ENCODE measurements at regions of chr10 and their contacts with region 1.

Region 1: GRCh38 chr10:101214446-101215396 is 14.5 kb downstream of the LBX1 start:
- DNase-seq: peak; percentile 69
- H3K4me3 Mint-ChIP-seq: peak overlapping the region; percentile 3
- H3K27ac Mint-ChIP-seq: peak overlapping the region; percentile 41
- H3K4me1 Mint-ChIP-seq: peaks cover 20% of the 10 kb centered on the region
- H3K27me3 Mint-ChIP-seq: peaks cover 70% of the 10 kb centered on the region

Region 2: DNA sequence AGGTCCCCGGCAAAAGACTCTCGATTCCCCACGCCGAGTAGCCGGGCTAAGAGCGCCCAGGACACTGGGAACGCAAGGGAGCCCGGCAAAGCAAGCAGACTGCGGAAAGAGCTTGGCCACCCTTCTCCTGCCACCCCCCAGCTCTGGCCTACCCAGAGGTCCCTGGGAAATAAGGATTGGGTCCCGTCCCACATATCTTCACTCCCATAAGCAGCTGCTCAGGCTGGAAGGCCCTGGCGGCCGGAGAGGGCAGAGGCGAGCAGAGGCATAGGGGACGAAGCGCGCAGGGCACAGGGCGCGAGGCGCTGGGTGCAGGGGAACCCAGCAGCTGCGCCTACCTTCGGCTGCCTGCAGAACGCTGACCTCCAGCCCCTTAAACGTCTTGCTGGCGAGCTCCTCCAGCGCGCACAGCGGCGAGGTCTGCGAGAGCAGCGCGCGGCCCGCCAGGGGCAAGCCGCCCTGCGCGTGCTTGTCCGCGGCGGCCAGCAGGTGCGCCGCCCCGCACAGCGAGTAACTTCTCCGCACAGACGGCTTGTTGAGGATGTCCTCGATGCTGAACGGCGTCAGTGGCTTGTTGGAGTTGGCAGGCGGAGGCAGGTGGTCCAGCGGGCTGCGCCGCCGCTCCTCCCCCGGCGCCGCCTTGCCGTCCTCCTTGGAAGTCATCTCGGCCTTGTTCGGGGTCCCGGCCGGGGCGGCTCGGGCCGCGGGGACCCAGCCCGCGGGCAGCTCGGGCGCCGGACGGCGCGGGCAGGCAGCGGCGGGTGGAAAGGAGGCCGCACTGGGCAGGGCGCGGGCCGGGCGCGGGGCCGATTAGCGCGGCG is 13.6 kb after region 1 on chr10:
- CTCF ChIA-PET with region 1: interaction called, 15 read pairs
- POLR2A ChIA-PET with region 1: no interaction called
- DNase-seq: no peak
- H3K4me3 Mint-ChIP-seq: peak overlapping the region; percentile 37
- H3K27ac Mint-ChIP-seq: peak overlapping the region; percentile 77
- H3K4me1 Mint-ChIP-seq: peaks cover 30% of the 10 kb centered on the region
- H3K27me3 Mint-ChIP-seq: peaks cover 74% of the 10 kb centered on the region

Region 3: DNA sequence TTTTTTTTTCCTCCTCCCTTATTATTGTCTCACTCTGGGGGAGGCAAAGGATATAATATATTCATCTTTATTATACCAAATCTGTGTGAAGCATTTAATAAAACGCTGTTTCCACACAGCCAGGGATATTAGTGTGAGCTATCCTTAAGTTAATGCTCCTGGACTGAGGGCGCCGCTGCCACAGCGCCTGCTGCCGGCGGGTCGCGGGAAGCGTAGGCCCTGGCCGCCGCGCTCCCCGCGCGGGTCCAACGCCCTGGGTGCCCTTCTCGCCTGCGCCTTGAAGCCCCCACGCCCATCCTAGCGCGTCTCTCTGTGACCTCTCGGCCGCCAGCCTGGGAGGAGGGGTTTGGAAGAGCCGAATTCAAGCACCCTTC is 24.0 kb after region 1 on chr10:
- CTCF ChIA-PET with region 1: interaction called, 11 read pairs
- POLR2A ChIA-PET with region 1: no interaction called
- DNase-seq: no peak
- H3K4me3 Mint-ChIP-seq: no peak overlapping the region
- H3K27ac Mint-ChIP-seq: no peak overlapping the region
- H3K4me1 Mint-ChIP-seq: peaks cover 4% of the 10 kb centered on the region
- H3K27me3 Mint-ChIP-seq: peaks cover 72% of the 10 kb centered on the region

Measured in activated CD4-positive, alpha-beta T cell treated with anti-CD3 and anti-CD28 coated beads, Interleukin-2, amount 10 ng/mL, durations not matched to agents 7 days and 5 days (primary cell).